CD14-positive monocyte (primary cell): ENCODE measurements at regions of chr4 and their contacts with region 1.

Region 1: GRCh38 chr4:184287697-184288255 is 70.1 kb upstream of the ENPP6 start:
- DNase-seq: no peak
- H3K4me3 ChIP-seq: no peak overlapping the region
- H3K4me3 Mint-ChIP-seq: no peak overlapping the region
- H3K27ac ChIP-seq: no peak overlapping the region
- H3K27ac Mint-ChIP-seq: no peak overlapping the region
- H3K4me1 ChIP-seq: peaks cover 3 to 5% of the 10 kb centered on the region in 2 donors
- H3K4me1 Mint-ChIP-seq: peaks cover 14% of the 10 kb centered on the region
- H3K27me3 ChIP-seq: no peaks in the 10 kb centered on the region
- H3K27me3 Mint-ChIP-seq: peaks cover 0 to 1% (median 0%) of the 10 kb centered on the region in 3 donors
- CTCF ChIP-seq: no peak

Region 2: DNA sequence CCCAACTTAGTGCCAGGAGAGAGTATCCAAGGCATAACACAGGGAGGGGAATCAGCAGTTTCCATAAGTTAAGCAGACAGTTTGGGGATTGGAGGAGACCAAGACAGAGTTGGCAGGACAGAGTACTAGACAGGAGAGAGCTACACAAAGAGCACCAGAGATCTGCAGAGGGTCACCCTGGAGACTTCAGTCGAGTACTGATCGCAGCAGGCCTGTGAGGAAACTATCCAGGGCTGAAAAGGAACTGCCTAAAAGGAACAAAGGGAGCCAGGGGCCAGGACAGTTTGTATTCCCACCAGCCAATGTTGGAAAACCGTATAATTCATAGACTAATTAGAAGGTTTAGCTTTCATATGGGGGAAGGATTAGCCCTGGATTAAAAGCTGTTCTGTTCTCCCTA is 10.5 kb after region 1 on chr4:
- intact Hi-C with region 1: loop called in 1 of 2 experiments (anchors 1 kb)
- DNase-seq: no peak
- H3K4me3 ChIP-seq: no peak overlapping the region
- H3K4me3 Mint-ChIP-seq: no peak overlapping the region
- H3K27ac ChIP-seq: no peak overlapping the region
- H3K27ac Mint-ChIP-seq: peak overlapping the region in 4 of 7 donors; percentile 8 to 83 (median 48)
- H3K4me1 ChIP-seq: peaks cover 9 to 11% of the 10 kb centered on the region in 2 donors
- H3K4me1 Mint-ChIP-seq: peaks cover 9% of the 10 kb centered on the region
- H3K27me3 ChIP-seq: no peaks in the 10 kb centered on the region
- H3K27me3 Mint-ChIP-seq: peaks cover 0 to 1% (median 1%) of the 10 kb centered on the region in 3 donors
- CTCF ChIP-seq: no peak